ENCODE measurements at regions of chr1 and their contacts with region 1.

Region 1: GRCh38 chr1:25204797-25205480 is 27.4 kb downstream of the SYF2 start:
- DNase-seq: no peak
- ATAC-seq: peak; percentile 48

Region 2: GRCh38 chr1:24847995-24848881 is 356.7 kb before region 1 on chr1:
- intact Hi-C with region 1: loop called (anchors 1 kb)
- DNase-seq: peak; percentile 95
- ATAC-seq: peak; percentile 95

Region 3: GRCh38 chr1:24930204-24931145 is 274.5 kb before region 1 on chr1 and contains the start of gene RUNX3:
- intact Hi-C with region 1: loop called (anchors 2 kb)
- DNase-seq: peak; percentile 88
- ATAC-seq: peak; percentile 49
- total RNA-seq, gene RUNX3: 1.8 TPM